GM12878 (cell line): ENCODE measurements at regions of chr4 and their contacts with region 1.

Region 1: DNA sequence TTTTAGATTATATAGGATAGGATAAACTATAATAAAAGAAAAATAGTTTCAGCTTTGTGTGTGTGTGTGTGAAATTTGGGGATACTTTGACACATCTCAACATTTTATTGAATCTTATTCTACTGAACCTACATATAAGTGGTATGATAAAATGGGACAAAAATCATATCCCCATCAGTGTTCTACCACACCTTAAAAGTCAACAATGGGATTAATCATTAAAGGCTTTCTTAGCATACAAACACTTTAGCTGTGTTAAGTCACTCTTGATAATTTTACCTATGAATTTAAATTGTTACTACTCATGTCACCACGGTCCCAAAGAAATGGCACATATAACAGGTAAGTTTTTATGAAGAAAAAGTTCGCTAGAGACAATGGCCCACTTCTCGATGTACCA is 37.7 kb upstream of the LRBA start:
- DNase-seq: no peak
- ATAC-seq: peak; percentile 7
- H3K4me3 ChIP-seq: no peak overlapping the region
- H3K27ac ChIP-seq: peak overlapping the region; percentile 38
- H3K4me1 ChIP-seq: peaks cover 14% of the 10 kb centered on the region
- H3K27me3 ChIP-seq: no peaks in the 10 kb centered on the region
- CTCF ChIP-seq: no peak
- EP300 ChIP-seq: no peak
- POLR2A ChIP-seq: no peak
- RAD21 ChIP-seq: no peak

Region 2: DNA sequence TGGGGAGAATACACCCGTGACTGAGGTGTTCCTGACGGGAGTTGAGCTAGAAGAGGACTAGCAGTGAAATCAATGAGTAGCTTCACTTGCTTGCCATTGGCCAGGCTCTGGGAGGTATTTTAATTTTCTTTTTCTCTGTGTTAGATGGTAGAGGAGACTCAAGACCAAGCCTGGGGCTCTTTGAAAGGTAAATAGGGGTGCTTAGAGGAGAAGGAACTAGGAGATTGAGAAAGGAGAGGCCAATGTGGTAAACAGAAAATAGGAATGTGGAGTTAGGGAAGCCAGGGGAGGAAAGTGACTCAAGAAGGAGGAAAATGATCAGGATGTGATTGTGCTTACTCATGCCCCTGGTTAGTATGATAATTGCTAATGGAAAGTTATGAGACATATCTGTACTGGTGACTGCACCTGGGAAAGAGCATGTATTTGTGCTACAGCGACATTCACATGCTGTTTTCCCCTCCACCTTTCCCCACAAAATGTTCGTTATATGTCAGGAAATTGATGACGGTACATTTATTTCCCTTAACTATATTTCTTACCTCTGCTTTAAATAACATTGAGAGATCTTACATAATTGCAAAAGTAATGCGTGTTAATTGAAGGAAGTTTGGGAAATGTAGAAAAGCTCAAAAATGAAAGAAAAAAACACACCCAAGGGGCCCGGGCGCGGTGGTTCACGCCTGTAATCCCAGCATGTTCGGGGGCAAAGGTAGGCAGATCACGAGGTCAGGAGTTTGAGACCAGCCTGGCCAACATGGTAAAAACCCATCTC is 20.8 kb before region 1 on chr4:
- CTCF ChIA-PET with region 1: interaction called, 5 read pairs
- POLR2A ChIA-PET with region 1: interaction called, 5 read pairs
- RAD21 ChIA-PET with region 1: interaction called, 13 read pairs
- SMC1A ChIA-PET with region 1: interaction called, 7 read pairs
- in situ Hi-C with region 1: no loop called
- intact Hi-C with region 1: no loop called
- DNase-seq: peak; percentile 54
- ATAC-seq: peak; percentile 69
- H3K4me3 ChIP-seq: peak overlapping the region; percentile 38; the same call in 1 of the 2 replicates
- H3K27ac ChIP-seq: peak overlapping the region; percentile 60
- H3K4me1 ChIP-seq: peaks cover 18% of the 10 kb centered on the region
- H3K27me3 ChIP-seq: no peaks in the 10 kb centered on the region
- CTCF ChIP-seq: no peak
- EP300 ChIP-seq: peak; percentile 75 to 82; a peak in 2 of 4 replicates
- POLR2A ChIP-seq: no peak
- RAD21 ChIP-seq: no peak

Region 3: DNA sequence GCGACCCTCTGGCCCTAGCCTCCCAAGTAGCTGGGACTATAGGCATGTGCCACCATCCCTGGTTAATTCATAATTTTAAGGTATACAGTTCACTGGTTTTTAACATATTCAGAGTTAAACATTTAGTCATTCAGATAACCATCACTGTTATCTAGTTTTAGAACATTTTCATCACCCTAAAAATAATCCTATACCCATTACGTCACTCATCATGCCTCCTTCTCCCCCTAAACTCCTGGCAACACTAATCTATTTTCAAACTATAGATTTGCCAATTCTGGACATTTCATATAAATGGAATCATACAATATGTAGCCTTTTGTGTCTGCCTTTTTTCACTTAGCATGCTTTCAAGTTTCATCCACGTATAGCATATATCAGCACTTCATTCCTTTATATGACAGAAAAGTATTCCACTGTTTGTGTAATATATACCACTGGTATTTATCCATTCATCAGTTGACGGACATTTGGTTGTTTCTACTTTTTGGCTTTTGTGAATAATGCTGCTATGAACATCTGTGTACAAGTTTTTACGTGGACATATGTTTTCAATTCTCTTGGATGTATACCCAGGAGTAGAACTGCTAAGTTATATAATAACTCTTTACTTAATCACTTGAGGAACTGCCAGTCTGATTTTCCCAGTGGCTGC is 14.7 kb after region 1 on chr4:
- CTCF ChIA-PET with region 1: no interaction called
- POLR2A ChIA-PET with region 1: interaction called, 7 read pairs
- RAD21 ChIA-PET with region 1: no interaction called
- SMC1A ChIA-PET with region 1: interaction called, 22 read pairs
- in situ Hi-C with region 1: no loop called
- intact Hi-C with region 1: no loop called
- DNase-seq: no peak
- ATAC-seq: peak; percentile 72
- H3K4me3 ChIP-seq: no peak overlapping the region
- H3K27ac ChIP-seq: no peak overlapping the region
- H3K4me1 ChIP-seq: no peaks in the 10 kb centered on the region
- H3K27me3 ChIP-seq: no peaks in the 10 kb centered on the region
- CTCF ChIP-seq: no peak
- EP300 ChIP-seq: no peak
- POLR2A ChIP-seq: no peak
- RAD21 ChIP-seq: no peak

Region 4: DNA sequence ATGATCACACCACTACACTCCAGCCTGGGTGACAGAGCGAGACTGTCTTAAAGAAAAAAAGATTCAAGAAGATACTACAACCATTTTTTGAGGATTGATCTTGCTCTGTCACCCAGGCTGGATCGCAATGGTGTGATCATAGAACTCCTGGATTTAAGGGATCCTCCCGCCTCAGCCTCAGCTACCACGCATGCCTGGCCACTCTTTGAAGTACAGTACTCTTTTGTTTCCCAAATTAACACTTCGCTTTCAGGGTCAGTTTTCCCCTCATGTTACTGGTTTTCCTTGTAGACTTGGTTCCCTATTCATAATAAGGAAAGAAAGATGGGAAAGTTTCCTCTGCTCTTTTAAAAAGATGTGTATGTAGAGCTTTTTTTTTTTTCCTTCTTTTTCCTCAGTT is 390.5 kb after region 1 on chr4:
- CTCF ChIA-PET with region 1: no interaction called
- POLR2A ChIA-PET with region 1: no interaction called
- RAD21 ChIA-PET with region 1: no interaction called
- SMC1A ChIA-PET with region 1: no interaction called
- in situ Hi-C with region 1: no loop called
- intact Hi-C with region 1: no loop called
- DNase-seq: no peak
- ATAC-seq: no peak
- H3K4me3 ChIP-seq: no peak overlapping the region
- H3K27ac ChIP-seq: no peak overlapping the region
- H3K4me1 ChIP-seq: no peaks in the 10 kb centered on the region
- H3K27me3 ChIP-seq: peaks cover 0 to 2% of the 10 kb centered on the region in 2 experiments; a peak in 1 of 4 replicates
- CTCF ChIP-seq: no peak
- EP300 ChIP-seq: no peak
- POLR2A ChIP-seq: no peak
- RAD21 ChIP-seq: no peak